ENCODE measurements at regions of chr1 and their contacts with region 1.

Region 1: DNA sequence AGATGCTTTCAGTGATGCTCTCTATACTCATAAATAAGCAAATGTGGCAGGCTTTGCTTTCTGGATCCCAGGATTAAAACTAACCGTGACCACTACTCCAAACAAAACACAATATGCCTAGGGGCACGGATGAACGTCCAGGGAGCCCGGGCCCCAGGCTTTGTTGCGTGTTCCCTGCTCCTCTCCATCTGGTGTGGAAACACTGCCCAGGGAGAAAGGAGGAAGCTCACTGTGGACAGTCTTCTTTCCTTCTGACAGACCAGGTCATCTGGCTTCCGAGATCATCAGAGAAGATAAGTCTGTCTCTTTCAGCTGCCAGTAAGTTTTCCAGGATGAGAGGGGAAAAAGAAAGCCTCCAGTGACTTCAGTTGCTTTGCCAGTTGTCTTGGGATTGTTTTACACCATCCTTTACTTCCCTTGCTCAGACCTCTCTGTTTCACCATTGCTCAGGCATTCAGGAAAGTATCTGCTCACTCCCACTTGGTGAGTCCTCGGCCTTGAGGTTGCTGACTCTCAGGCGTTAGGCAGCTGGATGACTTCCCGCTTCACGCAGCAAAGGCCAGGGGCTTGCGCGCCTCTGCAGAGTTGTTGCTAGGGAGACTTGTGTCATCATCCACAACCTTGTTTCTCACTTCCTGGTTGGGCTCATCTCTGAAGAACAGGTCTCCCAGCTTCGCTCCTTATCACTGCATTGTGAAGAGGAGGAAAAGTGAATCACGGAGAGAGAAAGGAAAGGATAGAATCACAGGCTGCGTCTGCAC is 20.6 kb upstream of the PGD start:
- DNase-seq: peak; percentile 72 to 76
- ATAC-seq: peak; percentile 76
- H3K4me3 ChIP-seq: no peak overlapping the region
- H3K27ac ChIP-seq: peak overlapping the region in 1 of 2 donors; percentile 37
- H3K4me1 ChIP-seq: no peaks in the 10 kb centered on the region
- H3K27me3 ChIP-seq: no peaks in the 10 kb centered on the region

Region 2: DNA sequence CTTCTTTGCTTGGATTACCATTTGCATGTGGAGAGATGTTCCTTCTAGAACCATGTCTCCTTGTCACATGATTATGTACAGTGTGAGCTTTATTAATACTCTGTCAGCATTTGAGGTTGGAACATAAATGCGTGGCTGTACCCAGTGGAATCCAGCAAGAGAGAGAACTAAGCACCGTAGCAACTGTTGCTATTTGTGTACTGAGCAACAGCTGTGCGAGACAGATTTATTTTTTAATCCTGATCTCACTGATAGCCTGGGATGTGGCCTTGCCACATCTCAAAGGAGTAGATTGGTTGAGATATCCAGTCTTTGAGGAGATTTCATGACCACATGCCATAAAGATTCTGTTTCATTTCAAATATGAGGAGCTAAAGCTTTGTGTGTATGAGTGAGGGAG is 124.5 kb before region 1 on chr1:
- intact Hi-C with region 1: no loop called
- DNase-seq: no peak
- ATAC-seq: peak; percentile 81
- H3K4me3 ChIP-seq: no peak overlapping the region
- H3K27ac ChIP-seq: no peak overlapping the region
- H3K4me1 ChIP-seq: peaks cover 2 to 9% of the 10 kb centered on the region in 2 donors
- H3K27me3 ChIP-seq: no peaks in the 10 kb centered on the region

Region 3: GRCh38 chr1:10398734-10399623 is 20.7 kb after region 1 on chr1 and contains the start of gene PGD:
- intact Hi-C with region 1: loop called in 1 of 2 experiments (anchors 1 kb)
- DNase-seq: peak; percentile 99 to 100
- ATAC-seq: peak; percentile 100
- H3K4me3 ChIP-seq: peak within 1 kb of the TSS; percentile 84 to 85
- H3K27ac ChIP-seq: peak within 1 kb of the TSS in 1 of 2 donors; percentile 50
- H3K4me1 ChIP-seq: no peaks in the 10 kb centered on the region
- H3K27me3 ChIP-seq: no peaks in the 10 kb centered on the region
- total RNA-seq, gene PGD: 46.7 TPM

Region 4: DNA sequence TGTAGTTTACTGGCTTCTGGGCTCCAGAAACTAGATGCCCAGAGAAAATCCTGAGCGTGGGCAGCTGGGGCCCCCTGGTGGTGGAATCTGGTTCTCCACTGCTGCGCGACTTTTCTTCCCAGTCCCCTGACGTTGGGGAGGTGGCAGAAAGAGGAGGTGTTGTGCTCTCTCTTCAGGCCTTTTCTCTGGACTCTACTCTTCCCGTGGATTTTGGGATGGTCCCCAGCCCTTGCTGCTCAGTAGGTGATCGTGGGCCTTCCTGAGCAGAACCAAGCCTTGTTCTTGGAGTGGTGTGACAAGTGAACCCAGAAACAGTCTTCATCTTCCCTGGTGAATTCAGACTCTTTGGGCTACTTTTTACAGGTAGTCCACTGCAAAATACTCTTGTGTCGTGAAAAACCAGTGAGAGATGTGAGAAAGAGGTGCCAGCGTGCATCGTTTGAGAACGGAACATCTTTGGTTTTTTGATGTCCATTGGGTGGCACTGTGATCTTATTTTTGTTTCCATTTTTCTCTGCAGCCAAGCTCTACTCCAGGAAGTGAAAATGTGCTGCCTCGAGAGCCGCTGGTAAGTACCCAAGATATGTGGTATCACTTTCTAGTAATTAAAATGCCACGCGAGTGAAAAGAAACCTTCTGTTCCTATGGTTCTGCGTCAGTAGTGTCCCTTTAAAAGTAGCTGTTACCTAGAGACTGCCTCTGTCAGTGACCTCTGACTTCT is 116.7 kb after region 1 on chr1:
- intact Hi-C with region 1: loop called in 1 of 2 experiments (anchors 5 kb)
- DNase-seq: peak; percentile 78 to 93
- ATAC-seq: peak; percentile 85
- H3K4me3 ChIP-seq: no peak overlapping the region
- H3K27ac ChIP-seq: no peak overlapping the region
- H3K4me1 ChIP-seq: no peaks in the 10 kb centered on the region
- H3K27me3 ChIP-seq: no peaks in the 10 kb centered on the region

Region 5: DNA sequence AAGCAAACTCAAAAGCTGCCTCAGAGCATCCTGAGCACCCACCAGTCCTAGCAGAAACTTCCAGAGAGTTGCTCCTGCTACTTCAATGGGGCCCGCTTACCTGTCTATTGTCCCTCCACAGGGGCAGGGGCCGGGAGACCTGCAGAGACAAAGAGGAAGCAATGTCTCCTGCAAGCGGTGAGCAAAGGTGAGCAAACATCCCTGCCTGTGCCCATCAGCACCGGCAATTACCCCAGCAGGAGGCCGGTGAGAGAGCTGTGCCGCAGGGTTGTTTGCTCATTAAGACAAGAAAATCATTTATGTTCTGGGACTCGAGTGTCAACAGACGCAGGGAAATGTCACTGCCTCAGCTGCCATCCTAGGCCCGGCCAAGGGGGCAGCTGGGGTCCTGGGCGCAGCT is 580.4 kb after region 1 on chr1:
- intact Hi-C with region 1: no loop called
- DNase-seq: no peak
- ATAC-seq: no peak
- H3K4me3 ChIP-seq: no peak overlapping the region
- H3K27ac ChIP-seq: no peak overlapping the region
- H3K4me1 ChIP-seq: no peaks in the 10 kb centered on the region
- H3K27me3 ChIP-seq: no peaks in the 10 kb centered on the region